ENCODE measurements at regions of chr1 and their contacts with region 1.

Region 1: DNA sequence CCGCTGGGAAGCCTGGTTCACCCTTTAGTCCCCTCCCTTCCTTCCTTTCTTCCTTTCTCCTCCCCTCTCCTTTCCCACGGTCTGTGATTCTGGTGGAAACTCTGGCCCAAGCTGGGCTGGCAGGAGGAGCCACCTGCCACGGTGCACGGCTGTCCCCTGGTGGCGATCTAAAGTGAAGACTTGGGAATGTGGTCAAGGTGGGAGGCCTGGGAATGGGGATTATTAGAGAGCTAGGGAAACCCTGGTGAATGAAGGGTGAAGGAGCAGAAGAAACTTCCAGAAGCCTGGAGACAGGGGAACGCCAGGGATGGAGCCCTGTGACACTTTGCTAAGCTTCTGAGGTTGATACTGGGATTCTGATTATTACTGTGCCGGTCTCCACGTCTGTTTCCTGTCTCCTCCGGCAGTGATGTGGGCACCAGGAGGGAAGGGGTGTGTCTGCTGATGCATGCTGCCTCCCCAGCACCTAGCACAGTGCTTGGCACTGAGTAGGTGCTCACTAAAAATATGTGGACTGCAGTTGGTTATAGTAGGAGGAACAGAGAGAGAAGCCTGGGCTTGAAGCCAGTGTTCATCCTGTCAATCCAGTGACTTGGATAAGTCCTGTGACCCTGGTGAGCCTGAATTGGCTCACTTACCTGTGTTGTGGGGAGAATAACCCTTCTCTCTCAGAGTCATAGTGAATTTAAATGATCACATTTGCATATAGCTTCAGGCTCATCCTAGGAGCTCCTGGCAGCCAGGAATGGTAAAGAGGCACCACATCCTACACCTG is 71.2 kb upstream of the NBPF3 start:
- DNase-seq: peak; percentile 47 to 59
- ATAC-seq: peak; percentile 76 to 81
- H3K4me3 ChIP-seq: no peak overlapping the region
- H3K27ac ChIP-seq: no peak overlapping the region
- H3K4me1 ChIP-seq: no peaks in the 10 kb centered on the region
- H3K27me3 ChIP-seq: no peaks in the 10 kb centered on the region
- CTCF ChIP-seq: peak; percentile 98 to 99 (median 98)
- POLR2A ChIP-seq: no peak

Region 2: DNA sequence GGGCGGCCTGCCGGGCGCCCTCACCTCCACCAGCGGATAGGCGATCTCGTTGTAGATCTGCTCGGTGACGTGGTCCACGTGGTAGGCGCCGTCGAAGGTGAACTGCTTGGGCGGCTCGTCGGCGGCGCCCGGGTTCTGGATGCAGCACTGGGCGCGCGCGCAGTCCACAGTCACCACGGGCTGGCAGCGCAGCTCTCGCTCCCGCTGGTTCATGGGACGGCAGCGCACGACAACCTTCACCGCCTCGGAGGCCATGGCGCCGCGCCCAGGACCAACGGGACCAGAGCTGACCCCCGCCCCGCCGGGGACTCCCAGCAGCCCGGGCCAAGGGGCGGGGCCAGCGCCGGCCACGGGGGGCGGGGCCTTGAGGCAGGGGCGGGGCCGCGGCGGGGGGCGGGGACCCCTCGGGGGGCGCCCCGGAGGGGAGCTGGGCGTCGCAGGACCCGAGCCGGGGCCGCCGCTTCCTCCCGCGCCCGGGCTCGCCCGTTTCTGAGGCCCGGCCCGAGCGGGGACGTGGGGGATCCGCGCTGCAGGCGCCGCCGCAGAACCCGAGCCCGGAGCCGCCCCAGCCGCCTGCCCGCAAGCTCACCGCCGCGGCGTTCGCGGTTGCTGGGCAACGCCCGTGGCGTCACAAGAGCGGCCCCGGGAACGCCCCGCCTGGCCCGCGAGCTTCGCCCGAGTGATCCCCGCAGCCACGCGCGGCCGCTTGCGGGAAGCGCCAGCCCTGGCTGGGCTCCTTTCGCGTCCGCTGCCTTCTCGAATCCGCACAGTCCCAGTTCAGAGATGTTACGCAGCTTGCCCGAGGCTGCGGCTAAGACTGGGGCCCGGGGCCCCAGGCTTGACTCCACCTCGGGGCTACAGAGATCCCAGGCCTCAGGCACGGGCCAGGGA is 651.0 kb before region 1 on chr1 and contains the start of gene KIF17:
- in situ Hi-C with region 1: loop called in 1 of 4 experiments (anchors 25 kb)
- intact Hi-C with region 1: no loop called
- DNase-seq: peak; percentile 24 to 52
- ATAC-seq: peak; percentile 62 to 69
- H3K4me3 ChIP-seq: peak within 1 kb of the TSS; percentile 40 to 61 (median 46)
- H3K27ac ChIP-seq: no peak within 1 kb of the TSS
- H3K4me1 ChIP-seq: no peaks in the 10 kb centered on the region
- H3K27me3 ChIP-seq: peaks cover 10 to 23% (median 14%) of the 10 kb centered on the region in 3 donors
- CTCF ChIP-seq: no peak
- POLR2A ChIP-seq: no peak
- total RNA-seq, gene KIF17: 2.6 to 3.8 (median 3.0) TPM

Region 3: GRCh38 chr1:21200767-21201166 is 167.9 kb before region 1 on chr1:
- in situ Hi-C with region 1: no loop called
- intact Hi-C with region 1: no loop called
- DNase-seq: no peak
- ATAC-seq: no peak
- H3K4me3 ChIP-seq: no peak overlapping the region
- H3K27ac ChIP-seq: no peak overlapping the region
- H3K4me1 ChIP-seq: no peaks in the 10 kb centered on the region
- H3K27me3 ChIP-seq: no peaks in the 10 kb centered on the region
- CTCF ChIP-seq: no peak
- POLR2A ChIP-seq: no peak

Region 4: GRCh38 chr1:21232044-21232443 is 136.7 kb before region 1 on chr1:
- in situ Hi-C with region 1: loop called (anchors 5 to 10 kb)
- intact Hi-C with region 1: loop called (anchors 1 kb)
- DNase-seq: peak in 1 of 2 donors; percentile 32
- ATAC-seq: peak; percentile 46 to 70
- H3K4me3 ChIP-seq: no peak overlapping the region
- H3K27ac ChIP-seq: no peak overlapping the region
- H3K4me1 ChIP-seq: no peaks in the 10 kb centered on the region
- H3K27me3 ChIP-seq: no peaks in the 10 kb centered on the region
- CTCF ChIP-seq: peak; percentile 72 to 85 (median 79)
- POLR2A ChIP-seq: no peak

Region 5: DNA sequence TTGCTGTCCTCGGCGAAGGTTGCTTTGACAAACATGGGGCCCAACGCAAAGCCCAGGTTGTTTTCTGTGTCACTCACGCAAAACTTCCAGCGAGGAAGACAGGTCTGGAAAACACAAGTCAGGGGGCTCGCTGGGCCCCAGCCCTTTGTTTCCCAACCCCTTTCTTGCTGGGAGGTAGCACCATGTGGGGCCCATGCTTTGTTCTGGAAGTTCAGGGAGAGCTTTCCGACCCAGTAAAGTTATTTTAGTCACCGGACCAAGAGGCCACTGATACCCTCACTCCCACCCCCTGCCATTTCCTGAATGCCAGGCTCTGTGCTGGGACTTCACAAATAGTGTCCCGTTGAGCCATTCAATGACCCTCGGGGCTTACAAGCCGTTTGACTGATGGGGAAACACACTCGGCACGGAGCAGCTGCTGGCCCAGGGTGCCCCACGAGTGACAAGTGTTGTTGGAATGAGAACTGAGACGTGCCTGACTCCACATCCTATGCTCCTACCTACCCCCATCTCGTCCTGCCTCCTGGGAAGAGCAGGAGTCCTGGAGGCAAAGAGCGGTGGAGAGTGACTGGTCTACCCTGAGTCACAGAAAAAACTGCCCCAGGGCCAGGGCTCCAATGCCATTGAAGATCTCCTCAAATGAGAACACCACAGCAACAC is 130.4 kb before region 1 on chr1:
- in situ Hi-C with region 1: loop called (anchors 5 to 10 kb)
- intact Hi-C with region 1: no loop called
- DNase-seq: no peak
- ATAC-seq: no peak
- H3K4me3 ChIP-seq: no peak overlapping the region
- H3K27ac ChIP-seq: no peak overlapping the region
- H3K4me1 ChIP-seq: no peaks in the 10 kb centered on the region
- H3K27me3 ChIP-seq: no peaks in the 10 kb centered on the region
- CTCF ChIP-seq: no peak
- POLR2A ChIP-seq: no peak

Region 6: DNA sequence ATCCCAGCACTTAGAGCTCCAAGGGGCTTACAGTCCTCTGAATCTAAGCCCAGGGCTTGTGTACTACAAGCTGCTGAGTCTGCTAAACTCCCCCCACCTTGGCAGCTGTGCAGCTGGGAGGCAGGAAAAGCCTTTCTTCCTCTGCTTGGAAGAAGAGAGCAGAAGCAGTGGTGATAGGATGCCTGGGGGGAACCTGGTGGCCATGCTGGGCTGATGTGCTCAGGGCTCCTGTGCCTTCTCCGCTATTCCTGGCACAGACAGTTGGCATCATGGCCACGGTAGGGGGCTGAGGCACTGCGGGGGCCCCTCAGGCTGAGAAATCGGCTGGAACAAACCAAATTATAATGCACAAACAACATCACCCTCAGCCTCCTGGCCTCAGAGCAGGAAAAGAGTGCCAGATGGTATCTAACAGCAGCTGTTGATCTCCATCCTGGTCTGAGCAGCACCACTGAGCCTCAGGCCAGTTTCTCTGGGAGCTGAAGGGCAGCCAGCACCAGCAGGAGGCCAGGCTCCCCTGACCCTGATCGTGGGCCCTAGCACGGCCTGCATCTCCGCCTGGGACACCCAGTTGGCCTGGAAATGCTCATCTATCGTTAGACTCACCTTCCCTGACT is 114.3 kb before region 1 on chr1:
- in situ Hi-C with region 1: no loop called
- intact Hi-C with region 1: loop called (anchors 1 kb)
- DNase-seq: peak; percentile 28 to 31
- ATAC-seq: peak; percentile 32 to 46
- H3K4me3 ChIP-seq: no peak overlapping the region
- H3K27ac ChIP-seq: peak overlapping the region; percentile 9 to 44 (median 22)
- H3K4me1 ChIP-seq: peaks cover 0 to 3% of the 10 kb centered on the region in 2 donors
- H3K27me3 ChIP-seq: no peaks in the 10 kb centered on the region
- CTCF ChIP-seq: no peak
- POLR2A ChIP-seq: no peak

Region 7: GRCh38 chr1:21294266-21294989 is 74.3 kb before region 1 on chr1:
- in situ Hi-C with region 1: no loop called
- intact Hi-C with region 1: no loop called
- DNase-seq: no peak
- ATAC-seq: no peak
- H3K4me3 ChIP-seq: no peak overlapping the region
- H3K27ac ChIP-seq: peak overlapping the region; percentile 50 to 70 (median 56)
- H3K4me1 ChIP-seq: peaks cover 12 to 16% of the 10 kb centered on the region in 2 donors
- H3K27me3 ChIP-seq: peaks cover 4 to 5% (median 5%) of the 10 kb centered on the region in 3 donors
- CTCF ChIP-seq: no peak
- POLR2A ChIP-seq: no peak

Region 8: GRCh38 chr1:21324368-21325141 is 44.1 kb before region 1 on chr1:
- in situ Hi-C with region 1: no loop called
- intact Hi-C with region 1: no loop called
- DNase-seq: peak; percentile 66 to 74
- ATAC-seq: peak; percentile 73
- H3K4me3 ChIP-seq: no peak overlapping the region
- H3K27ac ChIP-seq: peak overlapping the region; percentile 76 to 82 (median 80)
- H3K4me1 ChIP-seq: peaks cover 33 to 57% of the 10 kb centered on the region in 2 donors
- H3K27me3 ChIP-seq: no peaks in the 10 kb centered on the region
- CTCF ChIP-seq: no peak
- POLR2A ChIP-seq: no peak

Region 9: DNA sequence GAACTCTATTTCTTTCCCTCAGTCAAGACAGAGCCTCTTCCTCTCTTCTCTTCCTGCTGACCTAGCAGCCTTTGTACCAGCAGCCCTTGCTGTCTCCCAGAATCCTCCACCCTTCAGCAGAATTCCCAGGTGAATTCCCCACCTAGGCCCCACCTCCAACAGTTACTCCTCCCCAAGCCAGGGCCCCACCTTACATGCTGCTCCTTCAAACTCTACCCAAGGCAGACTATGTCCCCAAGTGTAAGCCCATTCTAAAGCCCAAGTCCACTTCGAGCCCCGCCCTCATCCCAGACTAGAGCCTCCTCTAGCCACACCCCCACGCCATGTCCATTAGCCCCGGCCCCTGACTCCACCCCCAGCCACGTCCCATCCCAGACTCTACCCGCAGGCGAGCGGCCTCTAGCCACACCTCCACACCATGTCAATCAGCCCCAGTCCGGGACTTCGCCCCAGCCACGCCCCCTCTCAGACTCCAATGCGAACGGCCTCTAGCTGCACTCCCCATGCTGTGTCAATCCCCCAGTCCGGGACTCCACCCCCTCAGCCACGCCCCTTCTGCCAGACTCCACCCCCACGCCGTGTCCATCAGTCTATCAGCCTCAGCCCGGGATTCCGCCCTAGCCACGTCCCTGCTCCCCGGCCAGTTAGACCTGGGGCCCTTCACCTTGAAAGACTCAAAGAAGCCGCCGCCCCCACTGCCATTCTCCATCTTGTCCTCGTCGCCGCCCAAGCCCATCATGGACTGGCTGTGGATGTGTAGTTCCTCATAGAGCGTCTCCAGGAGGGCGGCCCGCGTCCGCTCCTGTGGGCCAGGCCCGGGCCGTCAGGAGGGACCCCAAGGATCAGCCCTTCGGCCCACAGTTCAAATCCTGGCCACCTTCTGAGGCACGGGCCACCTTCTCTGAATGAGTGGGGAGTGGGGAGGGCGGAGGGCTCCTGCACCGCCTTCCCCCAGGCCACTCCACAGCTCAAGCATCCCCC is 239.1 kb after region 1 on chr1:
- in situ Hi-C with region 1: no loop called
- intact Hi-C with region 1: no loop called
- DNase-seq: peak; percentile 29
- ATAC-seq: peak in 1 of 2 donors; percentile 60
- H3K4me3 ChIP-seq: no peak overlapping the region
- H3K27ac ChIP-seq: no peak overlapping the region
- H3K4me1 ChIP-seq: no peaks in the 10 kb centered on the region
- H3K27me3 ChIP-seq: no peaks in the 10 kb centered on the region
- CTCF ChIP-seq: no peak
- POLR2A ChIP-seq: no peak